ENCODE measurements at regions of chr22 and their contacts with region 1.

Region 1: GRCh38 chr22:36065775-36066559 is 37.3 kb upstream of the RBFOX2 start:
- H3K4me3 ChIP-seq: peak overlapping the region; percentile 57
- H3K27ac ChIP-seq: peak overlapping the region; percentile 64
- H3K4me1 ChIP-seq: no peaks in the 10 kb centered on the region
- CTCF ChIP-seq: peak; percentile 100

Region 2: GRCh38 chr22:35840302-35840739 is 225.6 kb before region 1 on chr22:
- CTCF ChIA-PET with region 1: interaction called, 12 read pairs
- POLR2A ChIA-PET with region 1: interaction called, 3 read pairs
- H3K4me3 ChIP-seq: peak overlapping the region; percentile 63
- H3K27ac ChIP-seq: peak overlapping the region; percentile 62
- H3K4me1 ChIP-seq: peaks cover 32% of the 10 kb centered on the region
- CTCF ChIP-seq: no peak

Region 3: GRCh38 chr22:35947794-35948425 is 118.1 kb before region 1 on chr22:
- CTCF ChIA-PET with region 1: interaction called, 25 read pairs
- POLR2A ChIA-PET with region 1: no interaction called
- H3K4me3 ChIP-seq: no peak overlapping the region
- H3K27ac ChIP-seq: no peak overlapping the region
- H3K4me1 ChIP-seq: no peaks in the 10 kb centered on the region
- CTCF ChIP-seq: no peak

Region 4: DNA sequence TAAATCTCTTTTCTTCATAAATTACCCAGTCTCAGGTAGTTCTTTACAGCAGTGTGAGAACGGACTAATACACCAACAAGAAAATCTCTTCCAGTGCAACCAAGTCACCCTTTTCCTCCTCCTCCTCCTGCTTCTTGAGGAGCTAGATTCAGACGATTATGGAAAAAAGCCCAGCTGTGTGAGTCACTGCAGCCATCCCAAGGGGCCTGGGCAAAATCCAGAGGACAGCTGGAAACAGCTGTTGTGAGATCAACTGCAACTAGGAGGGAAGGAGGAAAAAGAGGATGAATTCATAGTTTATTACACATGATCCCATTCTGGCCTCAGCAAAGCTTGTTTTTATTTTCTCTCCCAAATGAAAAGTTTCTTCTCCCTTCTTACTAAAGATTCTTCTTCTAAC is 70.2 kb before region 1 on chr22:
- CTCF ChIA-PET with region 1: interaction called, 20 read pairs
- POLR2A ChIA-PET with region 1: interaction called, 4 read pairs
- H3K4me3 ChIP-seq: no peak overlapping the region
- H3K27ac ChIP-seq: no peak overlapping the region
- H3K4me1 ChIP-seq: peaks cover 9% of the 10 kb centered on the region
- CTCF ChIP-seq: no peak

Region 5: DNA sequence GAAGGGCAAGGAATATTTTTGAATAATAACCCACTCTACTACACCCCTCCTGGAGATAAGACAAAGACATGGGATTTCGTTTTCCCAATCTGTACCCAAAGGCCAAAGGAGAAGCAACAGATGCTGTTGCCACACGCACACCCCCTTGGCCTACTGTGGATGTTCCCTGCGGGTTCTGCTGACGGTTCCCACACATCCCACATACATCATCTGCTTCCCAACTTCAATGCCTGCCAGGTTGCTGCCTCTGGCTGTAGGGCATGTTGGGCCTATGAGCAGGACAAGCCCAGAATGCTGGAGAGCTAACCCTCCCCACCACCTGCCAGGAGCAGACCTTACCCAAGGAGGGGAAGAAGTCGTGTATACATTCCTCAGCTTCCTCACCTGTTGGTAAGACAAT is 23.7 kb before region 1 on chr22:
- CTCF ChIA-PET with region 1: interaction called, 16 read pairs
- POLR2A ChIA-PET with region 1: no interaction called
- H3K4me3 ChIP-seq: no peak overlapping the region
- H3K27ac ChIP-seq: no peak overlapping the region
- H3K4me1 ChIP-seq: peaks cover under 1% of the 10 kb centered on the region; the same call in 1 of the 2 replicates
- CTCF ChIP-seq: no peak

Region 6: DNA sequence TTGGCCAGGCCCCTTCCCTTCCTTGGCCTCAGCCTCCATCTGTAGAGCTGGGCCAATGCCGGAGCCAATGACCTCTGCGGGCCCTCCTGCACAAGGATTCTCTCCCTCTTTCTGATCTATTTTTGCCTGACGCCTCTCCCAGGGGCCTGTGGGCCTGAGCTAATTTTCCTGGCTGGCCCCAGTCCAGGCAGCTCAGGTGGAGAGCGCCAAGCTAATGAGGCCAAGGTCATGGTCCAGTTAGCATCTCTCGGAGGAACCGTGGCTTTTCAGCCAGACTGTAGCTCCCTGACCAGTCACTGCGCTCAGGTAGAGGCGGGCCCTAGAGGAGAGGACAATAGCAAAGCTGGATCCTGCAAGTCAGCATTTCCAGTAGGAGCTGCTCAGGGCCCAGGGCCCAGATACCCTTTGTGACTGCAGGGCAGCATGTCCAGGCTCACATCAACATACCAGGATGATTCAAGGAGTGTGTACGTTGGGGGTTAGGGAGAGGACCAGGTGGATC is 51.1 kb after region 1 on chr22:
- CTCF ChIA-PET with region 1: interaction called, 26 read pairs
- POLR2A ChIA-PET with region 1: no interaction called
- H3K4me3 ChIP-seq: no peak overlapping the region
- H3K27ac ChIP-seq: no peak overlapping the region
- H3K4me1 ChIP-seq: no peaks in the 10 kb centered on the region
- CTCF ChIP-seq: no peak